A549 (cell line): ENCODE measurements at regions of chr12 and their contacts with region 1.

Region 1: GRCh38 chr12:49358483-49359141 is 8.7 kb upstream of the SPATS2 start:
- DNase-seq: peak; percentile 80 to 84
- ATAC-seq: peak; percentile 87 to 92
- H3K4me3 ChIP-seq: no peak overlapping the region
- H3K27ac ChIP-seq: peak overlapping the region; percentile 52 to 65; a peak in 5 of 6 replicates
- H3K4me1 ChIP-seq: peaks cover 28% of the 10 kb centered on the region
- CTCF ChIP-seq: peak; percentile 96
- EP300 ChIP-seq: no peak
- POLR2A ChIP-seq: no peak
- RAD21 ChIP-seq: peak; percentile 96 to 98

Region 2: GRCh38 chr12:49331380-49332222 is 27.0 kb before region 1 on chr12:
- CTCF ChIA-PET with region 1: interaction called, 104 read pairs
- POLR2A ChIA-PET with region 1: no interaction called
- DNase-seq: peak; percentile 83 to 90
- ATAC-seq: peak; percentile 88 to 93
- H3K4me3 ChIP-seq: no peak overlapping the region
- H3K27ac ChIP-seq: peak overlapping the region in 1 of 2 experiments; percentile 28; a peak in 1 of 6 replicates
- H3K4me1 ChIP-seq: peaks cover 6% of the 10 kb centered on the region; the same call in 2 of the 3 replicates
- CTCF ChIP-seq: peak; percentile 82
- EP300 ChIP-seq: no peak
- POLR2A ChIP-seq: no peak
- RAD21 ChIP-seq: peak; percentile 85 to 86

Region 3: DNA sequence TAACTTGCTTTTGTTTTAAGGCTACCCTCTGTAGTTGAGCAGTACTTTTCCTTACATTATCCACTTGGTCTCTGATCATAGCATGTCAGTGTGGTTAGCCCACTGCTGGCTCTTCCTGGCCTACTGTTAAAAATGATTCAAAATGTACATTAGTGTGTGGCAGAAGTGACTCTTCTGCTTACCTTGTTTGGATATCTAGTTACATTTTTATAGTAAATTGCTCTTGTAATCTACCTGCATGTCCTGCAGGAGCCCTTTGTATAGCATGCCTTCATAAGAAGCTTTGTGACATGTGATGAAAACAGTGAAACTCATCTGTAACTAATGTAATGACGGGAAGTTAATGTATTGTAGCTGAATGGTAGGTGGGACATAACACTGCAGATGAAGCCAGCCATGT is 16.8 kb after region 1 on chr12:
- CTCF ChIA-PET with region 1: interaction called, 29 read pairs
- POLR2A ChIA-PET with region 1: interaction called, 3 read pairs
- DNase-seq: no peak
- ATAC-seq: peak; percentile 19 to 21; a peak in 3 of 6 replicates
- H3K4me3 ChIP-seq: no peak overlapping the region
- H3K27ac ChIP-seq: no peak overlapping the region
- H3K4me1 ChIP-seq: peaks cover 16% of the 10 kb centered on the region
- CTCF ChIP-seq: no peak
- EP300 ChIP-seq: no peak
- POLR2A ChIP-seq: no peak
- RAD21 ChIP-seq: no peak

Region 4: DNA sequence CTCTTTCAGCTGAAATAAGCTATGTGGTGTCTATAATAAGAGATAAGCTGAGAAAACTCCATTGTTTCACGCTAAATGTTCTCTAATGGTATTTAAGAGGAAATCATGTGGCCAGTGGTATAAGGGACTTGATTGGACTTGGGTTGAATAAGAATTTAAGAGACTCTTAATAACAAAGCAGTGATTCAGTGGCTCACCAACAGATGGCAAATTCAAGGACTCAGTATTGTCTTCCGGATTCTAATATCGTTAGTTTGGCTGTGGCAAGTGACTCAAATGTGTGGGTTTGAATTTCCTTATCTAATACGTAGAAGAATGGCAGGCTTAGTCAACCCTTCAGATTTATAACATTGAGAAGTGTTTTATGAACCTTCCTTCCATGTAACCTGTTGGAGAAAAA is 131.1 kb after region 1 on chr12:
- CTCF ChIA-PET with region 1: interaction called, 18 read pairs
- POLR2A ChIA-PET with region 1: no interaction called
- DNase-seq: no peak
- ATAC-seq: peak in 1 of 2 experiments; percentile 41; a peak in 3 of 6 replicates
- H3K4me3 ChIP-seq: no peak overlapping the region
- H3K27ac ChIP-seq: no peak overlapping the region
- H3K4me1 ChIP-seq: peaks cover 26% of the 10 kb centered on the region
- CTCF ChIP-seq: no peak
- EP300 ChIP-seq: no peak
- POLR2A ChIP-seq: no peak
- RAD21 ChIP-seq: no peak

Region 5: DNA sequence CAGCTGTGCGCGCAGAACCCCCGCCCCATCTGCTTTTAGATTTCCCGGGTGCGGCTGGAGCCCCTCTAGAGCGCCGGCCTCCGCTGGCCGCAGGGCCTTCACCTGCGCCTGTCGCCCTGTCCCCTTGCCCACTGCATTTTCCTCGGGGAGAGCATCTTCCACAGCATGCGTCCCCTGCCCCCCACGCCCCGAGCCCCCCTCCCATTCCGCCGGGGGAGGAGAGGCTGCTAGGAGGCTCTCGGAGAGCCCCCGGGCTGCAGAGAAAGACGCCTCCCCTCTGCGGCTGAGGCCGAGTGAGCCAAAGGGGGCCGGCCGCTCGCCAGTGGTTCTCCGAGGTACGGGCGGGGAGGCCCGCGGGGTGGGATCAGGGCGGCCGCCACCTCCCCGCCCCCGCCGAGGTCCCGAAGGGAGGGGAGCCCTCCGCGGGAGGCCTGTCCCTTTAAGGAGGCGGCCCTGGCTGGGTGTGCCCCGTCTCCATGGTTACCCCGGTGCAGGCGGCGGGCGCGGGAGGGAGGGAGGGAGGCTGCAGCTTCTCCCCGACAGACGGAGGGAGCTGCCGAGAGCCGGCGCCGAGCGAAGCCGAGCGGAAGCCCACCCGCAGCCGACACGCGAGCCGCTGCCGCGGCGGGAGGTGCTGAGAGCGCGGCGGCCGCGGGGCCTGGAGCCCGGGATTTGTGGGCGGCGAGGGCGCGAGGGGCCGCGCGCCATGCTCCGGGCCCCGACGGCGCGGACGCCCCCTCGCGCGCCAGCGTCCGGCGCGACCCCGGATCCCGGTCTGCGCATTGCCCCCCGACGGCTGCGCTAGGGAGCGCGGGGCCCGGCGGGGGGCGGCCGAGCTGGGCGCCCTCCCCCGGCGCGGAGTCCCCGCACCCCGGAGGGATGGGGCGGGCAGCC is 180.1 kb after region 1 on chr12 and contains the start of gene KCNH3:
- CTCF ChIA-PET with region 1: interaction called, 63 read pairs
- POLR2A ChIA-PET with region 1: no interaction called
- DNase-seq: peak; percentile 71 to 88
- ATAC-seq: peak; percentile 72 to 77
- H3K4me3 ChIP-seq: peak within 1 kb of the TSS; percentile 76
- H3K27ac ChIP-seq: peak within 1 kb of the TSS; percentile 65 to 91
- H3K4me1 ChIP-seq: peaks cover 32% of the 10 kb centered on the region
- CTCF ChIP-seq: no peak
- EP300 ChIP-seq: no peak
- POLR2A ChIP-seq: no peak
- RAD21 ChIP-seq: no peak
- polyA plus RNA-seq, gene KCNH3: 1.0 and 1.2 TPM in 2 replicates

Region 6: DNA sequence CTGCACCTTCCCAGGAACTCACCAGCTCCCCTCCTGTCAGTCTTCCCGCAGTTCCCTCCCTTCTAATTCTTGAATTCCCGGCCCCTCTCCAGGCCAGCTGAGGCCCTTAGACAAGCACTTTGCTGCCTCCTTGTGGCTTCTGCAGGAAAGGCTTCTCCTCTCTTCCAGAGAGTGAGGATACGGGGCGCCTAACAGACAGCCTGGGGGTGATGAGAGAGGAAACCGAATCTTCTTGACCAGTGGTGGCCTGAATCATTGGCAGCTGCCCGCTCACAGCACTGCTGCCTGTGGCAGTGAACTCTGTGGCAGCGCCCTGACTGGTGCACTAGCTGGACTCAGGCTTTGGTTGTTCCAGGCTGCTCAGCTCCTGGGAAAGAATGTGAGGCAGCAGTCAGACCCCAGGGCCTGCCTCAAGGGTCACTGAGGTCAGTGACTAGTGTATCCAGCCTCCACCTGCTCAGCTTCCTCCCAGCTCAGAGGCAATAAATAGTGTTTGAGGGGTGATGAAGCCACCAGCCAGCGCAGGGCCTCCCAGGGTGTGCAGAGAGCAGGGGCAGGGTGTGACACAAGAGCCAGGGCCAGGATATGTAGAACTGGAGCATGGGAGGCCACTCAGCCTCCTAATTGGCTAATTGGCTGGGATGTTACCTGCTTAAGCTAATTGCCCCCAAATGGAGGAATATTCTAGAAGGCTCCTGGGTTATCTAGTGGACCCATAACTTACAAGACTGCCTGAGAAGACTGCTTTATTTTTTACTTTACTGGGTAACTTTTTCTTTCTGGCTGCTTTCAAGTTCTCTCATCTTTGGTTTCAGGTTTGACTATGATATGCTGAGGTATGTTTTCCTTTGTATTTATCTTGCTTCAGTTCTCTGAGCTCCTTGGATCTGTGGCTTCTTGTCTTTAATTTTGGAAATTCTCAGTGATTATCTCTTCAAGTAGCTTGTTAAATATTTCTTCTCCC is 222.2 kb after region 1 on chr12:
- CTCF ChIA-PET with region 1: interaction called, 105 read pairs
- POLR2A ChIA-PET with region 1: no interaction called
- DNase-seq: peak; percentile 83 to 86
- ATAC-seq: peak; percentile 95 to 98
- H3K4me3 ChIP-seq: no peak overlapping the region
- H3K27ac ChIP-seq: 0 out of 6 replicates have a peak overlapping the region, but pooled peaks of 1 of the 2 experiments have one; percentile 22
- H3K4me1 ChIP-seq: peaks cover 16% of the 10 kb centered on the region; the same call in 2 of the 3 replicates
- CTCF ChIP-seq: peak; percentile 81
- EP300 ChIP-seq: no peak
- POLR2A ChIP-seq: no peak
- RAD21 ChIP-seq: peak; percentile 83 to 90